ENCODE measurements at regions of chr3 and their contacts with region 1.

Region 1: DNA sequence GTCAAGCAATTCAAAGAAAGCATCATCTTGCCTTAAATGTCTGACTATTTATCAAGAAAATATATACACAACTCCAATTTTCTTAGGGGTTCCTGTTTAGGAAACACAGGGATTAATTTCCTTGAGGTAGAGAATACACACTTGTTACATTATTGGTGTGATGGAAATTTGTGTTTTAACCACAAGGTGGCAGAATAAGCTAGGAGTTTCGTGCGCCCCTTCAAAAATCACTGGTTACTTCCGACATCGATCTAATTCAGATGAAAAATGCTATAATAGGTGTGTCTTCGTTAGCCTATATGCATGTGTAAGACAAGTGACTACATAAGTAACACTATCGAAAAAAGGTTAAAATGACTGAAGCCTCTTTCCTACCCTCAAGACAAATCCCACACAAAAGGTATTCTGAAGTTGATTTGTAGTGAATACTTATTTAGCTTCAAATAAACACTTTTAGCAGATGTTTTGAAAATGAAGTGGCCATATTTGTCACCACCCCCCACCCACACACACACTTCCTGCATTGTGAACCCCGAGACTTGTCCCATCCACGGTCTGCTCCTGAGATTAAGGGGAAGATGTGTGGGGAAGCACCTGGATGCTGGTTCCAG is 246.5 kb downstream of the ROBO1 start:
- DNase-seq: no peak
- H3K4me3 ChIP-seq: no peak overlapping the region
- H3K27ac ChIP-seq: no peak overlapping the region
- H3K27me3 ChIP-seq: no peaks in the 10 kb centered on the region
- CTCF ChIP-seq: peak; percentile 66

Region 2: GRCh38 chr3:81242871-81243270 is 1721.5 kb after region 1 on chr3:
- CTCF ChIA-PET with region 1: interaction called, 34 read pairs
- POLR2A ChIA-PET with region 1: no interaction called
- DNase-seq: no peak
- H3K4me3 ChIP-seq: no peak overlapping the region
- H3K27ac ChIP-seq: no peak overlapping the region
- H3K27me3 ChIP-seq: no peaks in the 10 kb centered on the region
- CTCF ChIP-seq: peak; percentile 58